A673 (cell line): ENCODE measurements at regions of chr1 and their contacts with region 1.

Region 1: GRCh38 chr1:160726498-160727315 is 12.3 kb upstream of the SLAMF7 start:
- DNase-seq: peak; percentile 84
- H3K4me3 ChIP-seq: no peak overlapping the region
- H3K27ac ChIP-seq: no peak overlapping the region
- H3K4me1 ChIP-seq: no peaks in the 10 kb centered on the region
- H3K27me3 ChIP-seq: no peaks in the 10 kb centered on the region
- CTCF ChIP-seq: peak; percentile 92

Region 2: GRCh38 chr1:160813215-160813614 is 86.5 kb after region 1 on chr1:
- CTCF ChIA-PET with region 1: no interaction called
- POLR2A ChIA-PET with region 1: no interaction called
- intact Hi-C with region 1: no loop called
- DNase-seq: no peak
- H3K4me3 ChIP-seq: no peak overlapping the region
- H3K27ac ChIP-seq: no peak overlapping the region
- H3K4me1 ChIP-seq: no peaks in the 10 kb centered on the region
- H3K27me3 ChIP-seq: peaks cover 3% of the 10 kb centered on the region
- CTCF ChIP-seq: no peak

Region 3: GRCh38 chr1:160827407-160827806 is 100.7 kb after region 1 on chr1:
- CTCF ChIA-PET with region 1: no interaction called
- POLR2A ChIA-PET with region 1: no interaction called
- intact Hi-C with region 1: loop called (anchors 5 kb)
- DNase-seq: no peak
- H3K4me3 ChIP-seq: no peak overlapping the region
- H3K27ac ChIP-seq: no peak overlapping the region
- H3K4me1 ChIP-seq: no peaks in the 10 kb centered on the region
- H3K27me3 ChIP-seq: peaks cover 4% of the 10 kb centered on the region
- CTCF ChIP-seq: no peak

Region 4: DNA sequence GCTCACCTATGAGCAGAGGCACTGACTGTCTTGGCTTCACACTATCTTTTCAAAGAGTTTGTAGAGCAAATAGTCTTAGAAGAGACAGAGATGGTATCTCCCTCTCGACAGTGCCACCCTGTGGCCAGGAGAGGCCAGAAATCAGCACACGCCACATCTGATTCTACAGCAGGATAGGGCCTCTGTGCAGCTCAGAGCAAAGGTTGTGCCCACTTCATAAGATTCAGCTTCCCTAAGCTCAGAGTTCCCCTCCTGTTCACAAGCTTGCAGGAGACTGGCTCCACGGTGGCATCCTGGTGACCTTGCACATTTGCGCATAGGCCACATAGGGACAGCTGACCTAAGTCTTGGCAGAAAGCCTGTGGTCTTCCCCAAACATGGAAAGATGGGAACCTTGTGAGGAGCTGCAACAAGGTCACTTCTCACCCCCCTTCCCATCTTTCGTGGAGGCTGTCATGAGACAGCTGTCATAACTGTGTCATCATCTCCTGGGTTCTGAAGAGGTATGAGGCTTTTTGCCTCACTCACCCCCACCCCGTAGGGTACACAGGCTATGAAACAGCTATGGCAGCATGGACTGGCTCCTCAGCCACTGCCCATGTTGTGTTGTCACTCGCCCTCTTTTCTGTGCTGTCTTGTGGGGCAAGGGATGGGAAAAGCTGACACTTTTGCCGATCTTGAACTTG is 224.9 kb after region 1 on chr1:
- CTCF ChIA-PET with region 1: interaction called, 4 read pairs
- POLR2A ChIA-PET with region 1: no interaction called
- intact Hi-C with region 1: loop called (anchors 5 kb)
- DNase-seq: peak; percentile 72
- H3K4me3 ChIP-seq: no peak overlapping the region
- H3K27ac ChIP-seq: no peak overlapping the region
- H3K4me1 ChIP-seq: no peaks in the 10 kb centered on the region
- H3K27me3 ChIP-seq: no peaks in the 10 kb centered on the region
- CTCF ChIP-seq: peak; percentile 89

Region 5: GRCh38 chr1:161098210-161099068 is 371.7 kb after region 1 on chr1 and contains the start of gene KLHDC9:
- CTCF ChIA-PET with region 1: no interaction called
- POLR2A ChIA-PET with region 1: no interaction called
- intact Hi-C with region 1: loop called (anchors 10 kb)
- DNase-seq: peak; percentile 88
- H3K4me3 ChIP-seq: peak within 1 kb of the TSS; percentile 66
- H3K27ac ChIP-seq: peak within 1 kb of the TSS; percentile 12
- H3K4me1 ChIP-seq: no peaks in the 10 kb centered on the region
- H3K27me3 ChIP-seq: peaks cover 3% of the 10 kb centered on the region
- CTCF ChIP-seq: no peak
- total RNA-seq, gene KLHDC9: 1.7 and 4.8 TPM in 2 replicates

Region 6: GRCh38 chr1:161139765-161140164 is 413.1 kb after region 1 on chr1:
- CTCF ChIA-PET with region 1: no interaction called
- POLR2A ChIA-PET with region 1: no interaction called
- intact Hi-C with region 1: loop called (anchors 5 kb)
- DNase-seq: peak; percentile 69
- H3K4me3 ChIP-seq: no peak overlapping the region
- H3K27ac ChIP-seq: no peak overlapping the region
- H3K4me1 ChIP-seq: no peaks in the 10 kb centered on the region
- H3K27me3 ChIP-seq: no peaks in the 10 kb centered on the region
- CTCF ChIP-seq: peak; percentile 67